GM18951 (cell line): ENCODE measurements at regions of chr2 and their contacts with region 1.

Region 1: GRCh38 chr2:231399853-231400680 is 4.6 kb downstream of the B3GNT7 start:
- POLR2A ChIP-seq: no peak

Region 2: DNA sequence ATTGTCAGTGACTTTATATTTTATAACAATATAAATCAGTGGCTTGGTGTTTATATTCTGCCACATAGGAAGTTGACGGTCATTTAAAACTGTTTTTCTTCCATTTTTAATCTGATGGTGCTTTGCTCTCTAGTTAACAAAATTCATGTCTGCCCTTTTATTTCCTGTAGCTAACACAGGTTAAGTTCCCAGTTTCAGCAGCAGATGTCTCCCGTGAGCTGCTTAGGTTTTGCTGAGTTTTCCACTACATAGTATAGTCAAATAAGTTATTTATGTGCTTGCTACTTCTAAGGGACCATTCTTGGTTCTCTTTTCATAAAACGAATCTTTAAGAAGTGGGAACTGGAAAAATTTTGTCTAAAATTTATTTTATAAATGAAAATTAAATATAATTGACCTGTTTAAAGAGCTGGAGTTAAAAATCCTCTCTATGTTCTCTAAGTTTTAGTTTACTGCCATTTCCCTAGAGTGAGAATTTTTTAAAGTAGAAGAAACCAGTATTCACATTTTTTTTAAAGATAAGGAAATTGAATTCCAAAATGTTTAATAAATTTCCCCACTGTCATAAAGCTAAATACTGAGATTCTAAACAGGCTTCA is 295.9 kb before region 1 on chr2:
- in situ Hi-C with region 1: loop called (anchors 5 kb)
- POLR2A ChIP-seq: no peak

Region 3: DNA sequence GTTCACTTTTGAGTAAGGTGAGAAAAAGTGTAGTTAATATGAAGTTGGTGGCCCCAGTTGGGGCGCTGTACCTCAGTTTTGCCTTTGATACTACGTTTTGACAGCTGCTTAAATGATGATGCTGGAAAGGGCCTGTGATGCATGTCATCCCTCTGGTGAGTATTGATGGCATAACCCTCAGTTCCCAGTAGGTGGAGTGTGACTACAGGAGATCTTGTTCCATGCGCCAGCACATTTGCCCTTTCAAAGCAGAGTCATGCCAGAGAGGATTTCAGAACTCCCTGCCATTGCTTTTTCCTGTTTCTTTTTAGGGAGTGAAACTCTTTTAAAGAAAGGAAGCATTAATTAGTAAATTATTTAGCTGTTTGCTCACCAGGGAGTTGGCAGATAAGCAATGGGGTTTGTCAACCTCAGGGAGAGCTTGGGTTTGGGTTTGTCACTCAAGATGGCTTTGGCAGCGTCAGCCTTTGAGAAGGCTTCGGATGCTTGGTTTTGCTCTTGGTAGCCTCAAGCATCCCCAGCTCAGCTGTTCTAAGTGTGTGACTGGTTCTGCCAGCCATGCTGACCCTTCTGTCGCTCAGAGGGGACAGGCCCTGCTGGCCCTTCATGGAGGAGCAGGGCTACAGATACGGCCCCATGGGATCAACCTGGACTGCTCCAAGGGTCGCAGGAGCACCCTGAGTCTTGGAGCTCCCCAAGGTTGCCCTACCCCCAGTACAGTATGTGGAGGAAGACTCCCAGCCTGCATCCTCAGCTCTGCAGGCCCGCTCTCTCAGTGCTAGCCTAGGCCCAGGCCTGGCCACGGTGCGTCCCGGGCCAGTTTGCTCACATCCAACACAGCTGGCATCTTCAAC is 172.5 kb before region 1 on chr2:
- in situ Hi-C with region 1: loop called (anchors 10 kb)
- POLR2A ChIP-seq: no peak